ENCODE measurements at regions of chr17 and their contacts with region 1.

Region 1: DNA sequence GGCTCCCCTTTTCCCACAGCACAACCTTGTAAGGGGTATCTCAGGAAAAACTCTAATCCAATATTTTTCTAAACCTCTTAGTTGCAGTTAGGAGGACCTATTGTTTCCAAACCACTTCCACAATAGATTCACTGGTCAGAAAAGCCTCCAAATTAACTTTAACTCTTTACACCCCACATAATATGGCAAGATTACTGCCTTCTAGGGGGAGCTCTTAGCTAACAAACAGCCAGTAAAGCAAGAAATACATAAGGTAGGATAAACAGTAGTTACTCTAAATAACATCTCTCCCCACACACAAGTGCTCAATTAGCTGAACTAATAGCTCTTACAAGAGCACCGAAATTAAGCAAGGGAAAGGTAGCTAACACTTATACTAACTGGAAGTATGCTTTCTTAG is 192.1 kb upstream of the KIF2B start:
- DNase-seq: no peak
- ATAC-seq: peak; percentile 55
- H3K4me3 ChIP-seq: no peak overlapping the region
- H3K27ac ChIP-seq: no peak overlapping the region
- H3K4me1 ChIP-seq: no peaks in the 10 kb centered on the region; a peak in 3 of 5 replicates
- H3K27me3 ChIP-seq: no peaks in the 10 kb centered on the region
- CTCF ChIP-seq: peak in 2 of 3 experiments; percentile 13 to 34; a peak in 2 of 6 replicates
- EP300 ChIP-seq: no peak
- POLR2A ChIP-seq: no peak
- RAD21 ChIP-seq: peak in 1 of 2 experiments; percentile 41; a peak in 3 of 4 replicates

Region 2: GRCh38 chr17:53819956-53820355 is 189.3 kb after region 1 on chr17:
- CTCF ChIA-PET with region 1: no interaction called
- POLR2A ChIA-PET with region 1: no interaction called
- in situ Hi-C with region 1: no loop called
- intact Hi-C with region 1: loop called (anchors 10 kb)
- DNase-seq: no peak
- ATAC-seq: no peak
- H3K4me3 ChIP-seq: no peak overlapping the region
- H3K27ac ChIP-seq: no peak overlapping the region
- H3K4me1 ChIP-seq: no peaks in the 10 kb centered on the region
- H3K27me3 ChIP-seq: no peaks in the 10 kb centered on the region
- CTCF ChIP-seq: no peak
- EP300 ChIP-seq: no peak
- POLR2A ChIP-seq: no peak
- RAD21 ChIP-seq: no peak

Measured in K562 (cell line).